ENCODE measurements at regions of chr6 and their contacts with region 1.

Region 1: DNA sequence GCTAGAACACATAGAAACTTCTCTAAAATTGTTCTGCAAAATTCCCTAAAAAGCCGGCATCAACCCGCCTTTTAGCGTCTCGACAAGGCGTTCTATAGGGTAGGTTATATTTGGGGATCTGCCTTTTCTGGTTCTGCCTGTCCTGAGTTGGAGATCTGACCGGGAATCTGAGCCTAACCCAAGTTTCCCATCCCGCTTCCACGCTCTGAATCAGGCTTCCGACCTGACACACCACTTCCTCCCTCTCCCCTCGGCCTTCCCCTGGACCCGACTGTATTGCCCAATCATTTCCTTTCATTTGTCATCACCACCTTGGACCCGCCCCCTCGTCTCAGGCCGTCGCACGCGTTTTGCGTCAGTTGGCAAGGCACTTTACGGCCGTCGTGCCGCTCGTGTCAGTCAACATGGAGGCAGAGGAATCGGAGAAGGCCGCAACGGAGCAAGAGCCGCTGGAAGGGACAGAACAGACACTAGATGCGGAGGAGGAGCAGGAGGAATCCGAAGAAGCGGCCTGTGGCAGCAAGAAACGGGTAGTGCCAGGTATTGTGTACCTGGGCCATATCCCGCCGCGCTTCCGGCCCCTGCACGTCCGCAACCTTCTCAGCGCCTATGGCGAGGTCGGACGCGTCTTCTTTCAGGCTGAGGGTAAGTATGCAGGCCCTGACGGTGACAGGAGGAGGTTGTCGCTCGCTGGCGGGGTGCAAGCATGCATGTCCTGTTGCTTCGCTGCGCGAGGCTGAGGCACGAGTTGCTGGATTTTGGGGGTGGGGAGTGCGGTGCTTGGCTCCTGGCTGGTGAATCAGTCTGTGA is at the start of gene ABT1:
- DNase-seq: peak; percentile 95 to 100 (median 97)
- ATAC-seq: peak; percentile 83
- H3K4me3 ChIP-seq: peak within 1 kb of the TSS; percentile 91
- H3K27ac ChIP-seq: peak within 1 kb of the TSS; percentile 88
- H3K4me1 ChIP-seq: peaks cover 16 to 19% of the 10 kb centered on the region in 2 experiments; a peak in 4 of 5 replicates
- H3K27me3 ChIP-seq: no peaks in the 10 kb centered on the region
- CTCF ChIP-seq: no peak; a peak in 1 of 6 replicates
- EP300 ChIP-seq: peak; percentile 82
- POLR2A ChIP-seq: peak; percentile 97
- RAD21 ChIP-seq: 0 out of 4 replicates have a peak, but pooled peaks of 1 of the 2 experiments have one; percentile 4
- polyA plus RNA-seq, gene ABT1: 8.8 to 25.2 TPM

Region 2: GRCh38 chr6:26003102-26003694 is 593.6 kb before region 1 on chr6:
- CTCF ChIA-PET with region 1: no interaction called
- POLR2A ChIA-PET with region 1: no interaction called
- in situ Hi-C with region 1: no loop called
- intact Hi-C with region 1: no loop called
- DNase-seq: peak; percentile 75 to 81 (median 76)
- ATAC-seq: peak; percentile 87
- H3K4me3 ChIP-seq: no peak overlapping the region
- H3K27ac ChIP-seq: no peak overlapping the region
- H3K4me1 ChIP-seq: peaks cover 5 to 10% of the 10 kb centered on the region in 2 experiments; a peak in 4 of 5 replicates
- H3K27me3 ChIP-seq: no peaks in the 10 kb centered on the region
- CTCF ChIP-seq: peak; percentile 77 to 87 (median 87)
- EP300 ChIP-seq: no peak
- POLR2A ChIP-seq: no peak
- RAD21 ChIP-seq: peak; percentile 64 to 77

Region 3: GRCh38 chr6:26175428-26176181 is 421.2 kb before region 1 on chr6:
- CTCF ChIA-PET with region 1: interaction called, 22 read pairs
- POLR2A ChIA-PET with region 1: interaction called, 3 read pairs
- in situ Hi-C with region 1: no loop called
- intact Hi-C with region 1: loop called (anchors 2 kb)
- DNase-seq: peak; percentile 60 to 88 (median 71)
- ATAC-seq: peak; percentile 41
- H3K4me3 ChIP-seq: no peak overlapping the region
- H3K27ac ChIP-seq: no peak overlapping the region
- H3K4me1 ChIP-seq: peaks cover 14% of the 10 kb centered on the region in 2 experiments
- H3K27me3 ChIP-seq: no peaks in the 10 kb centered on the region
- CTCF ChIP-seq: peak; percentile 59 to 87 (median 77)
- EP300 ChIP-seq: no peak; the same call in 1 of the 2 replicates
- POLR2A ChIP-seq: no peak
- RAD21 ChIP-seq: peak; percentile 87 to 88

Region 4: GRCh38 chr6:26342106-26343004 is 254.4 kb before region 1 on chr6:
- CTCF ChIA-PET with region 1: interaction called, 3 read pairs
- POLR2A ChIA-PET with region 1: interaction called, 7 read pairs
- in situ Hi-C with region 1: no loop called
- intact Hi-C with region 1: loop called (anchors 1 kb)
- DNase-seq: no peak
- ATAC-seq: peak; percentile 16
- H3K4me3 ChIP-seq: no peak overlapping the region
- H3K27ac ChIP-seq: no peak overlapping the region; the same call in 2 of the 3 replicates
- H3K4me1 ChIP-seq: peaks cover 11 to 54% of the 10 kb centered on the region in 2 experiments
- H3K27me3 ChIP-seq: no peaks in the 10 kb centered on the region
- CTCF ChIP-seq: no peak; a peak in 1 of 6 replicates
- EP300 ChIP-seq: no peak
- POLR2A ChIP-seq: no peak
- RAD21 ChIP-seq: no peak

Region 5: DNA sequence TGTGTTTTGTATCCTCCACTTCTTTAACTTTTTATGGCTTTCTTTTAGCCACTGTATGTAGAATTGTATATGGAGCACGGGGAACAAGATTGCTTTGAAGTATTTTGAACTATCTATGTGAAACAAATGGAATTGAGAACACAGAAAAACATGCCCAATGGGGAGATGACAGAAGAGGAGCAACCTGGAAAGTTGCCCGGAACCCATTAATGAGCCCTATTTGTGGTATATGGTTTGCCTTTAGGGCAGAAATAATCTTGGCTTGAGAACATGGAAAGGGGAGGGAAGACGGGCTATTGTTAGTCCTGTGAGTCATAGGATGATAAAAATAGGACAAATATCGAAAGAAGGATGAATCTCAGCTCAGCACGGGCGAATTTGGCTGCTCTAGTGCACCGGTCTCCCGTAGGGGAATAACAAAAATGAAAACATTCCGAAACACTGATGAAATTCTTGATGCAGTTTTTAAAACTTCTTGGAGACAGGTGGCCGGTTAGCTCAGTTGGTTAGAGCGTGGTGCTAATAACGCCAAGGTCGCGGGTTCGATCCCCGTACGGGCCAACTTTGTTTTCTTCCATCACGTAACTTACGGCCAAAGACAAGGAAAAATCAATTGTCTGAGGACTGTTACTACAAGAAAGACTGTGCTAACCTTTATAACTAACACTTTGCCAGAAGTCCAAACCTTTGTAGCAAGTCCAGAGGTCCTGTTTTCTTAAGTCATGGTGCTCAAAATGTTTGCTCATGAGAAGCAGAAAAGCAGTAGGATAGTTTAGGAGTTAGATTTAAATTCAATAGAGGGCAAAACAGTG is 42.9 kb before region 1 on chr6:
- CTCF ChIA-PET with region 1: no interaction called
- POLR2A ChIA-PET with region 1: interaction called, 7 read pairs
- in situ Hi-C with region 1: no loop called
- intact Hi-C with region 1: loop called (anchors 1 kb)
- DNase-seq: peak; percentile 62 to 93 (median 72)
- ATAC-seq: peak; percentile 66
- H3K4me3 ChIP-seq: peak overlapping the region; percentile 51
- H3K27ac ChIP-seq: peak overlapping the region; percentile 74
- H3K4me1 ChIP-seq: peaks cover 5 to 20% of the 10 kb centered on the region in 2 experiments; a peak in 4 of 5 replicates
- H3K27me3 ChIP-seq: no peaks in the 10 kb centered on the region
- CTCF ChIP-seq: no peak
- EP300 ChIP-seq: peak; percentile 73; the same call in 1 of the 2 replicates
- POLR2A ChIP-seq: no peak
- RAD21 ChIP-seq: no peak; a peak in 1 of 4 replicates

Region 6: DNA sequence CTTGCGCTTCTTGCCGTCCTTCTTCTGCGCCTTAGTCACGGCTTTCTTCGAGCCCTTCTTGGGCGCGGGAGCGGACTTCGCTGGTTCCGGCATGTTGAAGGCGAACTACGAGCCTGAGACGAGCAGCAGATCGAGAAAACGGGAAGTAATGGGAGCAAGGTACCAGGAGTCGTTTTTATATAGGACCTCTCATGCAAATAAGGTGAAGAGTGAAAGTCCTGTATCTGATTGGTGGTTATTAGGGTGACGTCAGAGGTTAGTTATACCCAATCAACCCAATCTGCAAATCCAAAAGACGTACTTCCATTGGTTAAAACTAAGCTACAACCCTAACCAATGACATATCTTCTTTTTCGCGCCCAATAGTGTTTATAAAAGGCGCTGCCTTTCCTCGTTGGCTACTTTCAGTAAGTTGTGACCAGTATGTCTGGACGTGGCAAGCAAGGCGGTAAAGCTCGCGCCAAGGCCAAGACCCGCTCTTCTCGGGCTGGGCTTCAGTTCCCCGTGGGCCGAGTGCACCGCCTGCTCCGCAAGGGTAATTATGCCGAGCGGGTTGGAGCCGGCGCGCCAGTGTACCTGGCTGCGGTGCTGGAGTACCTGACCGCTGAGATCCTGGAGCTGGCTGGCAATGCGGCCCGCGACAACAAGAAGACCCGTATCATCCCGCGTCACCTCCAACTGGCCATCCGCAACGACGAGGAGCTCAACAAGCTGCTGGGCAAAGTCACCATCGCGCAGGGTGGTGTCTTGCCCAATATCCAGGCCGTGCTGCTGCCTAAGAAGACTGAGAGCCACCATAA is 550.1 kb after region 1 on chr6:
- CTCF ChIA-PET with region 1: no interaction called
- POLR2A ChIA-PET with region 1: interaction called, 16 read pairs
- in situ Hi-C with region 1: no loop called
- intact Hi-C with region 1: no loop called
- DNase-seq: peak; percentile 93 to 99 (median 98)
- ATAC-seq: peak; percentile 68
- H3K4me3 ChIP-seq: peak overlapping the region; percentile 71
- H3K27ac ChIP-seq: peak overlapping the region; percentile 94
- H3K4me1 ChIP-seq: peaks cover 4 to 13% of the 10 kb centered on the region in 2 experiments
- H3K27me3 ChIP-seq: no peaks in the 10 kb centered on the region
- CTCF ChIP-seq: no peak
- EP300 ChIP-seq: no peak; the same call in 1 of the 2 replicates
- POLR2A ChIP-seq: peak; percentile 100
- RAD21 ChIP-seq: no peak; a peak in 1 of 4 replicates

Region 7: GRCh38 chr6:27886073-27886472 is 1289.3 kb after region 1 on chr6:
- CTCF ChIA-PET with region 1: no interaction called
- POLR2A ChIA-PET with region 1: no interaction called
- in situ Hi-C with region 1: no loop called
- intact Hi-C with region 1: no loop called
- DNase-seq: no peak
- ATAC-seq: no peak
- H3K4me3 ChIP-seq: no peak overlapping the region
- H3K27ac ChIP-seq: no peak overlapping the region
- H3K4me1 ChIP-seq: peaks cover 11 to 24% of the 10 kb centered on the region in 2 experiments
- H3K27me3 ChIP-seq: no peaks in the 10 kb centered on the region
- CTCF ChIP-seq: no peak
- EP300 ChIP-seq: no peak
- POLR2A ChIP-seq: no peak
- RAD21 ChIP-seq: no peak